Caki2 (cell line): ENCODE measurements at regions of chr10 and their contacts with region 1.

Region 1: DNA sequence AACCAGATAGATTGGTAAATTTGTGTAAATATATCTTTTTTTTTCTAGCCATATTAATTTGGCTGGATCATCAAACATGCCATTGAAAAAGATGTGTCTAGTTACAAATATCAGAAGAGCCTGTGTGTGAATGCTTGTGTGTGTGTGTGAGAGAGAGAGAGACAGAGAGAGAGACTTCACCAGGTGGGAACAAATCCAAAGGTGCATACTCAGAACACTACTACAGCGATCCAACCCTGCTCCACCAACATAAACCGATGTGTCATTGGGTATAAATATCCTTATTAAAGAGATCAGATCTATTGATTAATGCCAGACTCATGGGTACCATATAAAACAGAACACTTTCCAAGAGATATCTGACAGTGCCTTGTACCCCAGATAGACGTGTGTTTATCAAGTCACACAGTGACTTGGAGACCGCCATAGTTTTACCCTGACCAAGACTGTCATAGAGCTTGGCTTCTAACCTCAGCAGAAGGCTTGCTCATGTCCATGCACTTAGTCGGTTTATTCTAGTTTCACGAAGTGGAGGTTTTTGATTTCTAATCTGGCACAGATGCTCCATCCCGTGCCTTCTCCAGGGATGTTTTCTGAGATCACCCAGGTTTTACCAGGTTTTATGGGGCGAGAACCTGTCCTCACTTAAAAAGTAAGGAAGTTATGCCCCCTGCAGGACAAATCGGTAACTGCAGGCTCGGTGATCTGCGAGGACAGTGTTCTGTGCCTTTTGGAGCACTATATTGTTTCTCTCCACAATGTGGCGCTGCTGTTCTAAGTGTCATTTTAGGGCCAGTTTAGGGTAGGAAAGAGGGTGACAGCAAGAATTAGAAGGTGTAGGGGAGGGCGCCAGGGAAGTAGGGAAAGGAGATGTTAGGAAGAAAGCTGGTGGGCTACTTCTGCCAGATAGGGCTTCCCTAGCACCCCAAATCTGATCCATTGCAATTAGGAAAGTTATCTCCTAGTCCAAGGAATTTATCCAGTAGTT is 29.3 kb upstream of the WNT8B start:
- DNase-seq: peak; percentile 83

Region 2: DNA sequence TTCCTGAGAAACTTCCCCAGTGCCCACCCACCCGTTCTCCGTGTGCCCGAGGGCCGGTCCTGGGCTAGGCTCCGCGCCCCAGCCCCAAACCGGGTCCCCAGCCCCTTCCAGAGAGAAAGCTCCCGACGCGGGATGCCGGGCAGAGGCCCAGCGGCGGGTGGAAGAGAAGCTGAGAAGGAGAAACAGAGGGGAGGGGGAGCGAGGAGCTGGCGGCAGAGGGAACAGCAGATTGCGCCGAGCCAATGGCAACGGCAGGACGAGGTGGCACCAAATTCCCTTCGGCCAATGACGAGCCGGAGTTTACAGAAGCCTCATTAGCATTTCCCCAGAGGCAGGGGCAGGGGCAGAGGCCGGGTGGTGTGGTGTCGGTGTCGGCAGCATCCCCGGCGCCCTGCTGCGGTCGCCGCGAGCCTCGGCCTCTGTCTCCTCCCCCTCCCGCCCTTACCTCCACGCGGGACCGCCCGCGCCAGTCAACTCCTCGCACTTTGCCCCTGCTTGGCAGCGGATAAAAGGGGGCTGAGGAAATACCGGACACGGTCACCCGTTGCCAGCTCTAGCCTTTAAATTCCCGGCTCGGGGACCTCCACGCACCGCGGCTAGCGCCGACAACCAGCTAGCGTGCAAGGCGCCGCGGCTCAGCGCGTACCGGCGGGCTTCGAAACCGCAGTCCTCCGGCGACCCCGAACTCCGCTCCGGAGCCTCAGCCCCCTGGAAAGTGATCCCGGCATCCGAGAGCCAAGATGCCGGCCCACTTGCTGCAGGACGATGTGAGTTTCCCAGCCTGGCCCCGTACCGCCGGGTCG is 86.6 kb before region 1 on chr10 and contains the start of gene SCD:
- in situ Hi-C with region 1: loop called (anchors 25 kb)
- DNase-seq: peak; percentile 92
- total RNA-seq, gene SCD: 97.2 and 98.9 TPM in 2 replicates

Region 3: DNA sequence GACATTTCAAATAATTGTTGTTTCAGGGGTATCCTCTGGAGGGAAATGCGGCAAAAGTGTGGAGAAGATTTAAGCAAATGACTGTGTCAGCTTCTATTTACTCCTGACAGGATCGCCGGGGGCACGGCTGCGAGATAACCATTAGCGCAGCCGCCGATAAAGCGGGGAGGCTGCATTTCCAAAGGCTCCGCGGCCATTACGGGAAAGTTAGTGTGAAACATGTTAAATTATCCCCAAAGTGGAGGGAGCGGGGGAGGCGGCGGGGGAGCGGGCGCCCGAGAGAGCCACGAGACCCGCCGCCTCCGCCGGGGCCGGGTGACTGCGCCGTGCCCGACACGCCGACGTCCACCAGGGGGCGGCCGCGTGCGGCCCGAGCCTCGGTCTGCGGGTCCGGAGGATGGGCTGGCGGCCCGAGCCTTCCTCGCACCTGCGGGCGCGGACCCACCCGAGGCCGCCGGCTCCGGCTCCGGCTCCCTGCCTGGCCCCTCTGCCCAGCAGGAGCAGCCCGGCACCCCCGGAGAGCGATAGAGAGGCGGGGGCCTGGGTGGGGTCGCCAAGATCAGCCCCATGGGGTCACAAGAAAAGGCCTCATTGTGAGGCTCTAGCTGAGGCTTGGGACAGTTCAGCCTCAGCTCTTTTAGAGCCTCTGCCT is 237.4 kb after region 1 on chr10:
- in situ Hi-C with region 1: no loop called
- DNase-seq: no peak

Region 4: DNA sequence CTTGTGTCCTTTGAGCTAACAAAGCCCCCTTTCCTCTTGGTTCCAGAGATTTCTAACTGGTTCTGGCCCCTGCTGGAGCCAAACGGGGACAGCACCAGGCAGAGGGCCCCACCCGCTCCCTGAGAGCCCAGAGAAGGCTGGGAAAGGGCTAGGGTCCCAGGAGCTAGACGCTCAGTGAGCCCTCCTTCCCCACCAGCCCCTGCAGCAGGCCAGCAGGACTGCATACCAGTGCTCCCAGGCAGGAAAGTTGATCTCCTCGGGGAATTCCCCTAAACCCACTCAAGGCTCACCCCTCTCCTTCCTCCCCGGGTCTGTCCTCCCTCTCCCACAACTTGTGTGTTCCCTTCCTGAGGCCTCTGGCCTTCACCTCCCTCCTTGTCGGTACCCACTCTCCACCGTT is 359.5 kb after region 1 on chr10:
- in situ Hi-C with region 1: no loop called
- DNase-seq: no peak